CD4-positive, alpha-beta memory T cell (primary cell): ENCODE measurements at regions of chr9 and their contacts with region 1.

Region 1: DNA sequence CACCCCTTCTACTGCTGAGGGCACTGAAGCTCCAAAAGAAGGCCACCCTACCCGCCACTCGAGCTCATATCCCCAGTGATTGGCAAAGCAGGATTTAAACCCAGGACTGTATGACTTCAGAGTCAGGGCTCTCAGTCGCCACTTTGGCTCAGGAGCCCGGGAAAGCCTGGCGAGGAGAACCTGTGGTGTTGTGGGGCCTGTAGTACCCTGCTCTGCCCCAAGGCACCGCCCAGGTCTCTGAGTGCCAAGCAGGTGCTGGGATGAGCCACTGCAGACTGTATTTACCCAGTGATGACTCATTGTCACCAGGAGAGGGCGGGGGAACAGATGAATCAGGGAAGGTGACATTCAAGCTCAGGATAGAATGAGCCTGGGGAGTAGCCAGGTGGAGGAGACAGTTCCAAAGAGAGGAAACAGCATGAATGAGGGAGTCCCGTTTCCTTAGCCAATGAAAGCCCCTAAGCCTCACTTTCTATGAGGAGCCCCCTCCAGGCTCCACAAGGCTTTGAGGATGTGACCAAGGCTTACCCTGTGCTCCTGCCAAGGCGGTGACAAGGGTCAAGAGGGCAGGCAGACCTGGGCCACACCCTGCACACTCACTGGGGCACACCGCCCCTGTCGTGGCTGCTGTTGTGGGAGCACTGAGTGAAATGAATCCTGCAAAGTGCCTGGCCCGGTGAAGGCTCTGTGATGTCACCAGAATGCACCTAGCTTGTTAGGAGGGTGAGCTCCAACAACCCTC is 17.8 kb upstream of the DPM2 start:
- DNase-seq: peak; percentile 72 to 94 (median 73)
- H3K4me3 ChIP-seq: peak overlapping the region in 1 of 2 donors; percentile 2
- H3K4me3 Mint-ChIP-seq: peak overlapping the region; percentile 43 to 80 (median 80)
- H3K27ac ChIP-seq: peak overlapping the region; percentile 57
- H3K27ac Mint-ChIP-seq: peak overlapping the region; percentile 86 to 97 (median 93)
- H3K4me1 ChIP-seq: peaks cover 97% of the 10 kb centered on the region
- H3K4me1 Mint-ChIP-seq: peaks cover 48 to 92% (median 76%) of the 10 kb centered on the region in 4 donors
- H3K27me3 ChIP-seq: no peaks in the 10 kb centered on the region
- H3K27me3 Mint-ChIP-seq: no peaks in the 10 kb centered on the region

Region 2: GRCh38 chr9:127519301-127520166 is 435.9 kb before region 1 on chr9:
- CTCF ChIA-PET with region 1: no interaction called
- POLR2A ChIA-PET with region 1: no interaction called
- intact Hi-C with region 1: no loop called
- DNase-seq: peak in 1 of 5 donors; percentile 54
- H3K4me3 ChIP-seq: no peak overlapping the region
- H3K4me3 Mint-ChIP-seq: no peak overlapping the region
- H3K27ac ChIP-seq: no peak overlapping the region
- H3K27ac Mint-ChIP-seq: peak overlapping the region in 1 of 7 donors; percentile 36
- H3K4me1 ChIP-seq: no peaks in the 10 kb centered on the region
- H3K4me1 Mint-ChIP-seq: peaks cover 0 to 8% (median under 1%) of the 10 kb centered on the region in 4 donors
- H3K27me3 ChIP-seq: no peaks in the 10 kb centered on the region
- H3K27me3 Mint-ChIP-seq: no peaks in the 10 kb centered on the region

Region 3: DNA sequence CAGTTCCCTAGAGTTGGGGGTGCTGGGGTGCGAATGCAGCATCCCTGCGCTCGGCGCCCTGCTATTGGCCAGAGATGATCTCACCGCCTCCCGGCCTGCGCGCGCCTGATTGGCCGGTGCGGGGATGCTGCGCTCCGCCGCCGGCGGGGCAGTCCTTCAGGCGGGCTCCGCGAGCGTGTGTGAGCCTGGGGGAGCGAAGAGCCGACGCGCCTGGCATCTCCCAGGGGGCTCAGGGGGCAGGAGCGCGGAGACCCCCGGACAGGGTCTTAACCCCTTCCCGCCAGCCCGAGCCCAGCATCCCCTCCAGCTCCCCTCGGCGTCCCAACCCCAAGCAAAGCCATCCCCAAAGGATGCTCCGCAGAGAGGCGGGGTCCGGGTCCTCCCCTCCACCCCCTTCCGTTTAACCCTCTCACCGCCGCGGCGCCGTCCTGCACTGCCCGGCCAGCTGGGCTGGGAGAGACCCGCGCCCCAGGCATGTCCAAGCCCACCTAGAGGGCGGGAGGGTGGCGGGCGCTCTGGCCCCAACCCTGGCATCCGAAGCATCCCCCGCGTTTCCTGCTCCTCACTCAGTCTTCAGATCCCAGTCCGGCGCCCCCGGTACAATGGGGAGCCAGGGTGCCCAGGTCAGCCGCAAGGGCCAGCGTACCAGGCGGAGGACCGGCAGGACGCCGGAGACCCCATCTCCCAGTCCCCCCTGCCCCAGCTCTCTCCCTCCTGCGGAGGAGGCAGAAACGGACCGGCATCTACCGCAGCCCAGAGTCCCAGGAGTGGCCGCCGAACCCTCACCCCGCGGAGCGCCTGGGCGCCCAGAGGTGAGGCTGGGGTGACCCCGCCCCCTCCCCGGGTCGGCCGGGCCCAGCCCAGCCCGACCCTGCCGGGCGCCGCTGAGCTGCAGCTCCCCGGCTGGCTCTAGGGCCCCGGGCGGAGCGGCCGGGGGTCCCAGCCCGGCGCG is 201.1 kb before region 1 on chr9:
- CTCF ChIA-PET with region 1: no interaction called
- POLR2A ChIA-PET with region 1: no interaction called
- intact Hi-C with region 1: no loop called
- DNase-seq: no peak
- H3K4me3 ChIP-seq: no peak overlapping the region
- H3K4me3 Mint-ChIP-seq: no peak overlapping the region
- H3K27ac ChIP-seq: no peak overlapping the region
- H3K27ac Mint-ChIP-seq: no peak overlapping the region
- H3K4me1 ChIP-seq: no peaks in the 10 kb centered on the region
- H3K4me1 Mint-ChIP-seq: peaks cover 4 to 12% (median 8%) of the 10 kb centered on the region in 4 donors
- H3K27me3 ChIP-seq: no peaks in the 10 kb centered on the region
- H3K27me3 Mint-ChIP-seq: no peaks in the 10 kb centered on the region

Region 4: DNA sequence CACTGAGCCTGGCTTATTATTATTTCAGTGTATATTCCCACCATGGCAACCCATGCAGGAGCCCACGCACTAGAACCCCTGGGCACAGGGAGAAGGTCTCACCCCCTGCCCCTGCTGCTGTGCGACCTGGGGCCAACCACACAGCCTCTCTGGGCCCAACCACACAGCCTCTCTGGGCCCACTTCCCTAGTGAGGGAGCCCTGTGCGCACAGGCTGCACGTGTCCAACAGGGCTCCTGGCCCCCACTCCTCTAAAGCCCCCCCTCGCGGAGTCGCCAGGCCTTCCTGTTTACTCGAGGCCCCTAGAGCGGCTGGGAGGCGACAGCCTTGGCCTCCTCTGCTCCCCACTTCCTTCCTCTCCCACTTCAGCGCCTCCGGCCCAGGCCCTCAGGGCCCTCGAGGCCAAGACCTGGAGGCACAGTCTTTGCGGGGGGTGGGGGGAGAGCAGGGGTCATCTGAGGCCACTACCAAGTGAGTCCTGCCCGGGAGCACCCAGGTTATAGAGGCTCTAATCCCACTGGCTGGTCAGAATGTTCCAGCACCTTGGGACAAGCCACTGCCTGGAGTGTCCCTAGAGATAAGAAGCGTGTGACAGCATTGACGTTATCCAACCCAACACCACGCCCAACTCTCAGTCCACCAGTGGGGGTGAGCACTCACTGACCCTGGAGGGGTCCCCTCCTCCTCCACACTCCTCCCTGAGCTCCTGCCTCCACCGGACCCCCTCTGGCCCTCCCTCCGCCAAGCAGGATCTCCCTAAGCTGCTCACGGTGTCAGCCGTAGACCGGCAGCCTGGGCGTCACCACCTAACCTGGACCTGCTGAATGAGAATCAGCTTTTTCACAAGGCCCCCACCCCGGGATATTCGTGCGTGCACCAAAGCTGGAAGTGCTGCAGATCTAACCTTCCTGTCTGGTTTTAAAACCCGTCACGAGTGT is 93.1 kb before region 1 on chr9:
- CTCF ChIA-PET with region 1: no interaction called
- POLR2A ChIA-PET with region 1: no interaction called
- intact Hi-C with region 1: no loop called
- DNase-seq: peak; percentile 35 to 68 (median 45)
- H3K4me3 ChIP-seq: no peak overlapping the region
- H3K4me3 Mint-ChIP-seq: peak overlapping the region in 7 of 8 donors; percentile 5 to 79 (median 52)
- H3K27ac ChIP-seq: peak overlapping the region; percentile 59
- H3K27ac Mint-ChIP-seq: peak overlapping the region; percentile 87 to 97 (median 91)
- H3K4me1 ChIP-seq: peaks cover 45% of the 10 kb centered on the region
- H3K4me1 Mint-ChIP-seq: peaks cover 31 to 54% (median 39%) of the 10 kb centered on the region in 4 donors
- H3K27me3 ChIP-seq: no peaks in the 10 kb centered on the region
- H3K27me3 Mint-ChIP-seq: no peaks in the 10 kb centered on the region

Region 5: DNA sequence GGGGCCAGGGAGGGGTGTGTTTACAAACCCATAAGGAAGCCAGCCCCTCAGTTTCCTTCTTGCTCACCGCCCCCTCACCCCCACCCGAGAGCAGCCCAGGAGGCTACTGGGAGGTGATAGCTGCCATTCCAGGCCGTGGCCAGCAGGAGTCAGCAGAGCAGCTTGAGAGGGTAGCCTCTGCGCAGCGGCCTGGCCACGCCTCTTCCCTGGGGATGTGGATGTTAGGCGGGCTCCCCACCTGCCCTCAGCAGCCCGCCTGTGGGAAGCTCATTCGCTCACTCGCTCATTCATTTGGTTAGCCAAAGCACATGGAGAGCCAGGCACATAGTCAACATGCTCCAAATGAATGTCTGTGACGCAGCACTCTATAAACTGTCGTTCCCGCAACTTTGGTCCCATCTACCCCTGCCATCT is 11.7 kb before region 1 on chr9:
- CTCF ChIA-PET with region 1: interaction called, 109 read pairs
- POLR2A ChIA-PET with region 1: interaction called, 39 read pairs
- intact Hi-C with region 1: no loop called
- DNase-seq: peak; percentile 66 to 76 (median 72)
- H3K4me3 ChIP-seq: no peak overlapping the region
- H3K4me3 Mint-ChIP-seq: no peak overlapping the region
- H3K27ac ChIP-seq: no peak overlapping the region
- H3K27ac Mint-ChIP-seq: peak overlapping the region; percentile 78 to 93 (median 88)
- H3K4me1 ChIP-seq: peaks cover 30% of the 10 kb centered on the region
- H3K4me1 Mint-ChIP-seq: peaks cover 16 to 50% (median 23%) of the 10 kb centered on the region in 4 donors
- H3K27me3 ChIP-seq: no peaks in the 10 kb centered on the region
- H3K27me3 Mint-ChIP-seq: no peaks in the 10 kb centered on the region

Region 6: GRCh38 chr9:127980706-127981558 is 25.5 kb after region 1 on chr9 and contains the start of gene EEIG1:
- CTCF ChIA-PET with region 1: interaction called, 55 read pairs
- POLR2A ChIA-PET with region 1: interaction called, 482 read pairs
- intact Hi-C with region 1: no loop called
- DNase-seq: peak; percentile 96 to 99 (median 97)
- H3K4me3 ChIP-seq: peak within 1 kb of the TSS; percentile 72 to 92
- H3K4me3 Mint-ChIP-seq: peak within 1 kb of the TSS; percentile 94 to 98 (median 97)
- H3K27ac ChIP-seq: peak within 1 kb of the TSS; percentile 78
- H3K27ac Mint-ChIP-seq: peak within 1 kb of the TSS; percentile 92 to 97 (median 94)
- H3K4me1 ChIP-seq: peaks cover 46% of the 10 kb centered on the region
- H3K4me1 Mint-ChIP-seq: peaks cover 27 to 51% (median 38%) of the 10 kb centered on the region in 4 donors
- H3K27me3 ChIP-seq: no peaks in the 10 kb centered on the region
- H3K27me3 Mint-ChIP-seq: no peaks in the 10 kb centered on the region
- total RNA-seq, gene EEIG1: 516 to 550 TPM

Region 7: DNA sequence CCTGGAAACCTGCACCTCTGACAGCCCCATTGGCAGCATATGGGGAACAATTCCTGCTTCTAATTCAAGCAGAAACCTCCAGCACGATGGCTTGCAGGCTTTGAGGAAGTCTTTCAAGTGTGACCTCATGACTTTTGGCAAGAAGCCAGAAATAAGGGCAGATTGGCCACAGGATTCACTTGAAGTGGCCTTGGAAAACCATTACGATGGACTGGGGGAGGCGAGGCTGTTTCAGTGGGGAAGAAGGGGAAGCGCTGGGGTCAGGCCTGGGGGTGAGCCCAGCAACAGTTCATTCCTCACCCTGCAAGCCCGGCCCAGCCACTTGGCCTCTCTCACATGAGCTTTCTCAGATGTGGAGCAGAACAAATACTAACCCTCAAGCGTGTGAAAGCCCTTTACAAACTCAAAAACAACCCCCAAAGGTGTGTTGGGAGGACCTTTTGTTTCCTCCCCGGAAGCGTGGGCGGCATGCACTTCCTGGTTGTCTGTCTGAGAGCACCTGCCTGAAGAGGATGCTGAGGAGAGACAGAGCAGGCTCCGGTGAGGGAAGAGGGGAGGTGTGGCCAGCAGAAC is 52.2 kb after region 1 on chr9:
- CTCF ChIA-PET with region 1: interaction called, 7 read pairs
- POLR2A ChIA-PET with region 1: interaction called, 23 read pairs
- intact Hi-C with region 1: no loop called
- DNase-seq: peak; percentile 90 to 97 (median 92)
- H3K4me3 ChIP-seq: peak overlapping the region in 1 of 2 donors; percentile 29
- H3K4me3 Mint-ChIP-seq: peak overlapping the region; percentile 75 to 93 (median 82)
- H3K27ac ChIP-seq: peak overlapping the region; percentile 46
- H3K27ac Mint-ChIP-seq: peak overlapping the region; percentile 94 to 100 (median 97)
- H3K4me1 ChIP-seq: peaks cover 79% of the 10 kb centered on the region
- H3K4me1 Mint-ChIP-seq: peaks cover 33 to 90% (median 61%) of the 10 kb centered on the region in 4 donors
- H3K27me3 ChIP-seq: no peaks in the 10 kb centered on the region
- H3K27me3 Mint-ChIP-seq: no peaks in the 10 kb centered on the region

Region 8: GRCh38 chr9:128026773-128027541 is 71.5 kb after region 1 on chr9:
- CTCF ChIA-PET with region 1: interaction called, 300 read pairs
- POLR2A ChIA-PET with region 1: interaction called, 1,317 read pairs
- intact Hi-C with region 1: loop called (anchors 2 kb)
- DNase-seq: peak in 4 of 5 donors; percentile 50 to 75 (median 54)
- H3K4me3 ChIP-seq: peak overlapping the region; percentile 0 to 25
- H3K4me3 Mint-ChIP-seq: peak overlapping the region; percentile 74 to 89 (median 82)
- H3K27ac ChIP-seq: peak overlapping the region; percentile 80
- H3K27ac Mint-ChIP-seq: peak overlapping the region; percentile 98 to 100 (median 99)
- H3K4me1 ChIP-seq: peaks cover 100% of the 10 kb centered on the region
- H3K4me1 Mint-ChIP-seq: peaks cover 54 to 94% (median 78%) of the 10 kb centered on the region in 4 donors
- H3K27me3 ChIP-seq: no peaks in the 10 kb centered on the region
- H3K27me3 Mint-ChIP-seq: no peaks in the 10 kb centered on the region

Region 9: DNA sequence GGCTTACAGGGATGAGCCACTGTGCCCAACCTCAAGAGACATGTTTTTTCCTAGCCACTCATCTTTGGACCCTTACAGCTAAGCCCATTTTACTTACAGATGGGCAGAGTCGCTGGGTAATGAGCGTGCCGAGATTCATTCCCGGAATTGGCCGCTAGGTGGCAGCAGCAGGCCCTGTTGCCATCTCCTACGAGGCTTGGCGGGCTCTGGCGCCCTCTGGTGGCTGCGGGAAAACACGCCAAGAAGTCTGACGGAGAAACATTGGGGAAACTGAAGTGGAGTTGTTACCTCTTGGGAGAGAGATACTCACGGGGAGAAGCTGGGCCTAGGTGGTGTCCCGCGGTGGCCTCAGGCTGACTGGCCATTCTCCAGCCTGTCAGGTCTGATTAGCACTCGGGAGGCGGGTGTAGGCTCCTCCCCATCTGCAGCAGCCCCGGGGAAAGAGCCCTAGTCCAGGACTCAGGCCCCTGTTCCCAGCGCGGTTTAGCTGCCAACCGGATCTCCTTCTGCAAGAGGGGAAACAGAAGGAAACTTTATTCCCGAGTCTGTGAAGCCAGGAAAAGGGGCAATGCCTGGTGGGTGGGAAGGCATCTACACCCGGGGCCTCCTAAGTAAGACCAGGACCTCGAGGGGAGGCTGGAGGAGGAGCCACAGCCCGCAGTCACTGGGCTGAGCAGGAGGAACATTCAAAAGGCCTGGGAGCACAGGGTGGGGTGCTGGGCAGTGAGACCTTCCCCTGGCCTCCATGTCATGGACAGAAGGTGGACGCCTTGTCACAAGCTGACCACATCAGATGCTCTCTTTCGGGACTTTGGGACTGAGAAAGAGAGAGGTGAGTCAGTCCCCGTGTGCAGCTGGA is 162.4 kb after region 1 on chr9:
- CTCF ChIA-PET with region 1: interaction called, 21 read pairs
- POLR2A ChIA-PET with region 1: no interaction called
- intact Hi-C with region 1: no loop called
- DNase-seq: peak; percentile 88 to 93 (median 91)
- H3K4me3 ChIP-seq: no peak overlapping the region
- H3K4me3 Mint-ChIP-seq: peak overlapping the region in 2 of 8 donors; percentile 48 to 50
- H3K27ac ChIP-seq: no peak overlapping the region
- H3K27ac Mint-ChIP-seq: peak overlapping the region in 6 of 7 donors; percentile 9 to 91 (median 61)
- H3K4me1 ChIP-seq: peaks cover 6% of the 10 kb centered on the region
- H3K4me1 Mint-ChIP-seq: peaks cover 3 to 7% (median 5%) of the 10 kb centered on the region in 4 donors
- H3K27me3 ChIP-seq: no peaks in the 10 kb centered on the region
- H3K27me3 Mint-ChIP-seq: no peaks in the 10 kb centered on the region